ENCODE measurements at regions of chr1 and their contacts with region 1.

Region 1: DNA sequence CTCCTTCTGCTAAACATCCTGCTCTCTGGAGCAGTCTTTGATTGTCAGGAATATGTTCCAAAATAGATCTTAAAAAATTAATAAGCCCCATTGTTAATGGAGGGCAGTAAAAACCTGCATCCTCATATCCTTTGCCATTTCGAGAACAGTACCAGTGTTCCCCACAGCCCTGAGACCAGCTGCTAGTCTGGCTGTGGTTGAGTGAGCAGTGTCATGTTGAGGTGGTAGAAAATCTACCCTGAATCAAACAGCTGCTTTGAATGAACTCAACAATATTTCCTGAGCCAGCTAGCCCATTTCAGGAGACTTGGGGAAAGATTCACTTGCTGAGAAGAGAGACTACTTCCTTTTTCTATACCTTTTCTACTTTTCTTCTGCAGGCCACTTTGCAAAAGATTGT is 24.4 kb downstream of the FABP3 start:
- DNase-seq: no peak
- CTCF ChIP-seq: no peak

Region 2: DNA sequence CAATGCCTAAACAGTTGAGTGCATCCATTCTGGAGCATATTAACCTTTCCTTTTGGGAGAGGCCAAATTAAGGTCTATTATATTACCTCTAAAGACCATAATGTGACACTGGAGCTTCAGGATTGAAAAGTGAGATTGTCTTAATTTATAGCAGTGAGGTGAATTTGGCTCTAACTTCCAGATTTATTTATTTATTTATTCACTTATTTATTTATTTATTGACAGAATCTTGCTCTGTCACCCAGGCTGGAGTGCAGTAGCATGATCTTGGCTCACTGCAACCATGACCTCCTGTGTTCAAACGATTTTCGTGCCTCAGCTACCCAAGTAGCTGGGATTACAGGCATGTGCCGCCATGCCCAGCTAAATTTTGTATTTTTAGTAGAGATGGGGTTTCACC is 32.5 kb before region 1 on chr1:
- CTCF ChIA-PET with region 1: no interaction called
- POLR2A ChIA-PET with region 1: no interaction called
- DNase-seq: no peak
- CTCF ChIP-seq: no peak

Region 3: GRCh38 chr1:31361607-31362006 is 13.2 kb after region 1 on chr1:
- CTCF ChIA-PET with region 1: interaction called, 12 read pairs
- POLR2A ChIA-PET with region 1: no interaction called
- DNase-seq: no peak
- CTCF ChIP-seq: no peak

Region 4: GRCh38 chr1:31815752-31816500 is 467.5 kb after region 1 on chr1 and contains the start of gene SPOCD1:
- CTCF ChIA-PET with region 1: no interaction called
- POLR2A ChIA-PET with region 1: no interaction called
- DNase-seq: peak; percentile 83
- CTCF ChIP-seq: peak; percentile 83